PC-3 (cell line): ENCODE measurements at regions of chr11 and their contacts with region 1.

Region 1: DNA sequence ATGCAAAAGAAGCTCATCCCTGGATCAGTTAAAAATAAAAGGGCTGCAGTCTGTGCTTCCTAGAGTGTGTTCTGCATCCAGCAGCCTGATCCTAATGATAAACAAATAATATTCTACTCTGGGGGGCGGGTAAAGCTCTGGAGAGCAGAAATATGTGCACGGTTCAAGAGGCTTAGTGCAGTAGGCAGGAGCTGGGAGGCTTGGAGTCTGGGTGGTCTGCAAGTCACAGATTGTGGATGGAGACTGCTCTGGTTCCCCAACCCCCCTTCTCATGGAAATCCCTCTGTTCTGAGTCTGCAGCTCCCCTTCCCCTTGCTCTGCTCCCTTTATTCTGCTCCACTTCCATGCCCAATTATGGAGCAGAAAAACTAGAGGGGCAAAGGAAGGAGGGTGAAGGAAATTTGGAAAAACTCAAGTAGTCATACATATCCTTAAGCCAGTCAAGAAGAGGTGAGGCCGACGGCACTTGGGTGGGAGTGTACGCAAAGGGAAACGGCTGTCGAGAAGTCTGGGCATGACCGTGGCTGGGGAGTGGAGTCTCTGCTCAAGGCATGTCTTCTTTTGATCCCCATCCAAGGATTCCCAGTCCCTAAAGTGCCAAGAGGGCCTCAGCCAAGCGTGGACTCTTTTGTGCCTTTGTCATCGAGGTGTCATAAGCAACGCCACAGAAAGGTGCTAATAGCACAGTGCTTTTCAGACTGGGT is 16.3 kb upstream of the CLMP start:
- DNase-seq: no peak
- ATAC-seq: no peak
- H3K4me3 ChIP-seq: no peak overlapping the region
- H3K27ac ChIP-seq: no peak overlapping the region
- H3K4me1 ChIP-seq: peaks cover 6% of the 10 kb centered on the region; the same call in 1 of the 2 replicates
- H3K27me3 ChIP-seq: no peaks in the 10 kb centered on the region
- CTCF ChIP-seq: no peak

Region 2: DNA sequence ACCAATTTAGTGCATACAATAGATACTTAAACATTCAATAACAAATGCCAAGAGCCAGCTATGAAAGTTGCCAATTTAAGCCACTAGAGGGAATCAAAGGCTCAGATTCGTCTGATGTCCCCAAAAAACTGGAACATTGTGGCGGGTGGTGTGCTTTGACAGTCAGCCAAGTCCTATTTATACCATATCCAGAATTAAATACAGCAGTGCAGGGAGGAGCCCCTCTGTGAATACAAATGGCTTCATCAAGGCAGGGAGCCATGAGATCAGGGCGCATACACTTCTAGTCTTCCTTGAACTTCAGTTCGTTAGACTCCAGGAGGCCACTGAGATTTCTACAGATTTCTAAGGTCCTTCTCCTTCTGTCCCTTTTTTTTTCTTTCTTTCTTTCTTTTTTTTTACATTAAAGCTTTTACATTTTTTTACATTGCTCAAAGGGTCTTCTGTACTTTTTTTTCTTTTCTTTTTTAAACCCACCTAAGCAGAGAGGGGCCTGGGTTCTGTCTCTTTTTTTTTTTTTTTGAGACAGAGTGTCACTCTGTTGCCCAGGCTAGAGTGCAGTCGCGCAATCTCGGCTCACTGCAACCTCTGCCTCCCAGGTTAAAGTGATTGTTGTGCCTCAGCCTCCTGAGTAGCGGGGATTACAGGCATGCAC is 107.8 kb before region 1 on chr11:
- CTCF ChIA-PET with region 1: interaction called, 10 read pairs
- POLR2A ChIA-PET with region 1: no interaction called
- intact Hi-C with region 1: no loop called
- DNase-seq: peak; percentile 87
- ATAC-seq: peak; percentile 75
- H3K4me3 ChIP-seq: no peak overlapping the region
- H3K27ac ChIP-seq: no peak overlapping the region
- H3K4me1 ChIP-seq: 0 out of 2 replicates have a peak, but pooled peaks cover 4% of the 10 kb centered on the region
- H3K27me3 ChIP-seq: no peaks in the 10 kb centered on the region
- CTCF ChIP-seq: peak; percentile 93

Region 3: GRCh38 chr11:123264431-123264780 is 53.1 kb after region 1 on chr11:
- CTCF ChIA-PET with region 1: no interaction called
- POLR2A ChIA-PET with region 1: no interaction called
- intact Hi-C with region 1: no loop called
- DNase-seq: no peak
- ATAC-seq: no peak
- H3K4me3 ChIP-seq: no peak overlapping the region
- H3K27ac ChIP-seq: no peak overlapping the region
- H3K4me1 ChIP-seq: peaks cover 30% of the 10 kb centered on the region
- H3K27me3 ChIP-seq: no peaks in the 10 kb centered on the region
- CTCF ChIP-seq: no peak